ENCODE measurements at regions of chr9 and their contacts with region 1.

Region 1: DNA sequence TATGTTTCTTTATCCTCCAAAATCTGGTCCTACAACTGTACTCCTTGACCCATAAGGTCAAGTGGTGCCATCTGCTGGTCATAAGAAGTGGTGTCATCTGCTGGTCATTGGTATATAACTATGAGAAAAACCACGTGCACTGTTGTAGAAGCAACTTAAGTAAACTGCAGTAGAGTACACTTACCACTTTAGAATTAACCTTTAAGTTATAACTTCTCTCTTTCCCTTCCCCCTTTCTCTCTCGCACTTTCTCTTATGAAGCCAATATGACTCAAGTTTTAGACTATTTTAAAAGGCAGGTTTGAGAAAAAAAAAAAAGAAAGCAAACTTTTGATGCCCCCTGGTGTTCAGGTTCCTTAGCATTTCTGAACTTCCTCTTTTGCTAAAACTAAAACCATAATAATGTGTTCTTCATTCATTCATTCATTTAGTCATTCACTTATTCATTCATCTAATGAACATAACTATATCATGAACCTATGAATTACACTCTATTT is 12.8 kb upstream of the MTAP start:
- DNase-seq: peak; percentile 95
- H3K4me3 ChIP-seq: peak overlapping the region; percentile 27
- CTCF ChIP-seq: peak; percentile 69

Region 2: DNA sequence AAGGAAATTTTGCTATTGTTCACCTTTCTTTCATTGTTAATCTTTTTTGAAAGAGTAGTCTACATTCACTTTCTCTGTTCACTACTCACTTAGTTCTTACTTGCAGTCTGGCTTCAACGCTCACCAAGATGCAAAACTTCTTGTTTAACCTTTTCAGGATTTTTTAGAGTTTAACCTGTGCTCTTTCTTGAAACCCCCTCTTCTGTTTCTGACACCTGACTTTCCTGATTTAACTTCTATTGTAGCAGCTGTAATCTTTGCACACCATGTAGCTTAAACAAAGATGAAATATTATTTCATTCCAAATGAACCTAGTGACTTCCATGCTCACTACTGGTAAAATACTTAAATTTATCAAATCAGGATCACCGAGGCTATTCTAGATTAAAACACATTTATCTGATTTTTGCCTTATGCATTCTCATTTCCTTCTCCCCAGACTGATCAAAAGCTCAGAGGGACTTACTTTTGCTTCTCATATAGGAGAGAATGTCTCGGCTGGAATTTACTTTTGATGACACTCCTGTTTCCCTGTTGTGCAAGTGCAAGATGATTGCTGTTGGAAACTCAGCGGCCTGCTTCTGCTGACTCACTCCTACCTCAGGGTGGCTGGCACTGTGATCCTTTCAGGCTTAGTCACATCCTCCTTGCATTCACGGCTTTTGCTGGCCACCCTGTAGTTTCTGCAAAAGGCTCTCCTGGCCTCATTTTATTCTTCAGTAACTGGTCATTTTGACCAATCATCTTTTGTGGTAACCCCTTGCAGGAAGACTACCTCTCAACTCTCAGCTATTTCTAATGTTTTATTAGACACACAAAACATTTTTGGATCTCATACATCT is 198.1 kb before region 1 on chr9:
- in situ Hi-C with region 1: loop called (anchors 25 kb)
- DNase-seq: peak; percentile 98
- H3K4me3 ChIP-seq: peak overlapping the region; percentile 35
- CTCF ChIP-seq: no peak

Region 3: GRCh38 chr9:21616082-21616778 is 173.4 kb before region 1 on chr9:
- in situ Hi-C with region 1: no loop called
- DNase-seq: peak; percentile 96
- H3K4me3 ChIP-seq: no peak overlapping the region
- CTCF ChIP-seq: no peak

Region 4: GRCh38 chr9:21862871-21863270 is 73.3 kb after region 1 on chr9:
- in situ Hi-C with region 1: no loop called
- DNase-seq: no peak
- H3K4me3 ChIP-seq: no peak overlapping the region
- CTCF ChIP-seq: no peak